ENCODE measurements at regions of chr10 and their contacts with region 1.

Region 1: GRCh38 chr10:50658165-50658564 is 34.4 kb upstream of the SGMS1 start:
- DNase-seq: no peak
- ATAC-seq: peak; percentile 4; the same call in 2 of the 3 replicates
- H3K4me3 ChIP-seq: no peak overlapping the region
- H3K27ac ChIP-seq: no peak overlapping the region
- H3K4me1 ChIP-seq: peaks cover 8% of the 10 kb centered on the region
- H3K27me3 ChIP-seq: no peaks in the 10 kb centered on the region
- CTCF ChIP-seq: no peak
- EP300 ChIP-seq: no peak
- POLR2A ChIP-seq: no peak
- RAD21 ChIP-seq: no peak

Region 2: DNA sequence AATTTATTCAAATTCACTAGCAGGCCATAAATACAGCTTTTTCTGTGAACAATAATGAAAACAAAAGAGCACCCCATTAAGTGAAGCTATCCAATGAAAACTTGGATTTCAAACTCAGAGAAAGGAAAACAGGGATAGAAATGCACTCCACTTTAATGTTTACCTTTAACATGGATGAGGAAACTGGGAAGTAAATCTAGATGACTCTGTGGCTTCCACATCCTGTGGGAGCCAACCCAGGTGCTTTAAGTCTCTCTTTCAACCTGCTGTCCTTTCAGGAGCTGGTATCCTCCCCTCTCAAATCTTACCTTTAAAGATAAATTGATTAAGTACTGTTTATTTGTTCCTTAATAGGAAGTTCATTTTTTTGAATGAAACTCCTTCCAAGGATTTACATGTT is 12.9 kb before region 1 on chr10:
- CTCF ChIA-PET with region 1: interaction called, 19 read pairs
- POLR2A ChIA-PET with region 1: interaction called, 5 read pairs
- RAD21 ChIA-PET with region 1: interaction called, 4 read pairs
- SMC1A ChIA-PET with region 1: interaction called, 105 read pairs
- in situ Hi-C with region 1: no loop called
- intact Hi-C with region 1: no loop called
- DNase-seq: no peak
- ATAC-seq: no peak
- H3K4me3 ChIP-seq: no peak overlapping the region
- H3K27ac ChIP-seq: no peak overlapping the region
- H3K4me1 ChIP-seq: peaks cover 16% of the 10 kb centered on the region
- H3K27me3 ChIP-seq: no peaks in the 10 kb centered on the region
- CTCF ChIP-seq: no peak
- EP300 ChIP-seq: no peak
- POLR2A ChIP-seq: no peak
- RAD21 ChIP-seq: no peak

Region 3: DNA sequence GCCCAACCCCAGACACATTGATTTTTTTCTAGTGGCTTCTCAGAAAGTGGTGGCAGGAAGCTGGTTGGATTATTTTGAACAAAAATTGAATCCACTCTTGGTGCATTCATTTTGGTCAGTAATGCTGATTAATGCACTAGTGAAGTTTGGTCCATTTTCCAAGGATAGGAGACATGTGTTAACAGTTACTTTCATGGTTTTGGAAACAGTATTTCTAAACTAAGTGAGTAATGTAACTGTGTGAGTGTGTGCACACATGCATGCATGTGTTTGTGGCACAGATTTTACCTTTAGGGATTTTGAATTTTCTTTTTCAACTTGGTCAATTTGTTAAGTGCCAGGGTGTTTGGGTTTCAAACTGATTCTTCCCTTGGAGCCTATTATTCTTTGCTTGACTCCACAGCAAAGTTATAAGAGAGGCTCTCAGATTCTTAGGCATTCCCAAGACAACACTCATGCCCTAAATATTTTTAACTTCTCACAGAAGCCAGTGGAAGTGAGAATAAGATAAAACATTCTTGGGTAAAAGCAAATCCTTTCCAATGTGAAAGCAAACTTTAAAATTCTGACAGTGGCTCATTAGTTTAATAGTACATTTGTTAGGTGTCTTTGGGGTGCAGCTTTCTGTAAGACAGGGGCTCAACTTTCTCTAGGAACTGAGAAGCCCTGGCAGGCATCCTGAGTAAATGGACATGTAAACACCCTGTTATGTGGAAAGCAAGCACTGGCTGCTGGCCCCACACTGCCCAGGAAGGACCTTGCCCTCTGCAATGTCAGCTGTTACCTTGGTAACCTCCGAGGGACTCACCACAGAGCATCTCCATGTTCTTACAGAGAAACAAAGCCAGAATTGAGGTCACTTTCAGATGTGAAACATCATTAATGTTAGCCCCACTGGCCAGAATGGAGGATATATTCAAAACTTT is 149.9 kb after region 1 on chr10:
- CTCF ChIA-PET with region 1: no interaction called
- POLR2A ChIA-PET with region 1: no interaction called
- RAD21 ChIA-PET with region 1: no interaction called
- SMC1A ChIA-PET with region 1: no interaction called
- in situ Hi-C with region 1: no loop called
- intact Hi-C with region 1: no loop called
- DNase-seq: no peak
- ATAC-seq: no peak
- H3K4me3 ChIP-seq: no peak overlapping the region
- H3K27ac ChIP-seq: no peak overlapping the region
- H3K4me1 ChIP-seq: no peaks in the 10 kb centered on the region
- H3K27me3 ChIP-seq: no peaks in the 10 kb centered on the region; a peak in 1 of 4 replicates
- CTCF ChIP-seq: no peak
- EP300 ChIP-seq: no peak
- POLR2A ChIP-seq: no peak
- RAD21 ChIP-seq: no peak

Region 4: DNA sequence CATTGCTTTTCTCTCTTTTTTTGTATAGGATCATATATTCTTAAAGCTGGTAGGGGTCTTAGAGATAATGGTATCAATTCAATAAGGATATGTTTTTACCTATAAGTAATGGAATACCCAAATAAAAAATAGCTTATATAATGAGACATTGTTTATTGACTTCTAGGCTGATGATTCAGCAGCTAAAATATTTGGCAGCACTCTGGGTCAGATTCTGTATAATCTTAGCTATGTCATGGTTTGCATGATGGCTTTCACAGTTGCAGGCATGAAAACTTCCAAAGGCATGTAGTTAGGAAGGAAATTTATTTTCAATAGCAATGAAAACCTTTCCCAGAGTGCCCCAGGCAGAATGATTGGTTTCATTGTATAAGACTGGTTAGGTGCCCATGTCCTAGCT is 259.3 kb after region 1 on chr10:
- CTCF ChIA-PET with region 1: no interaction called
- POLR2A ChIA-PET with region 1: no interaction called
- RAD21 ChIA-PET with region 1: no interaction called
- SMC1A ChIA-PET with region 1: no interaction called
- in situ Hi-C with region 1: no loop called
- intact Hi-C with region 1: no loop called
- DNase-seq: no peak
- ATAC-seq: no peak
- H3K4me3 ChIP-seq: no peak overlapping the region
- H3K27ac ChIP-seq: no peak overlapping the region
- H3K4me1 ChIP-seq: no peaks in the 10 kb centered on the region
- H3K27me3 ChIP-seq: no peaks in the 10 kb centered on the region
- CTCF ChIP-seq: no peak
- EP300 ChIP-seq: no peak
- POLR2A ChIP-seq: no peak
- RAD21 ChIP-seq: no peak

Measured in GM12878 (cell line).